Ascending aorta (tissue), 2 donors: ENCODE measurements at regions of chr6 and their contacts with region 1.

Region 1: GRCh38 chr6:72861935-72862432 is 240.1 kb downstream of the KCNQ5 start:
- DNase-seq: peak in 1 of 2 donors; percentile 80
- H3K4me3 ChIP-seq: no peak overlapping the region
- H3K27ac ChIP-seq: peak overlapping the region; percentile 58 to 86
- H3K4me1 ChIP-seq: peaks cover 9 to 30% of the 10 kb centered on the region in 2 donors
- H3K27me3 ChIP-seq: no peaks in the 10 kb centered on the region
- CTCF ChIP-seq: no peak

Region 2: GRCh38 chr6:72654071-72654621 is 207.8 kb before region 1 on chr6:
- intact Hi-C with region 1: loop called (anchors 5 kb)
- DNase-seq: no peak
- H3K4me3 ChIP-seq: no peak overlapping the region
- H3K27ac ChIP-seq: no peak overlapping the region
- H3K4me1 ChIP-seq: peaks cover 0 to 5% of the 10 kb centered on the region in 2 donors
- H3K27me3 ChIP-seq: no peaks in the 10 kb centered on the region
- CTCF ChIP-seq: no peak

Region 3: DNA sequence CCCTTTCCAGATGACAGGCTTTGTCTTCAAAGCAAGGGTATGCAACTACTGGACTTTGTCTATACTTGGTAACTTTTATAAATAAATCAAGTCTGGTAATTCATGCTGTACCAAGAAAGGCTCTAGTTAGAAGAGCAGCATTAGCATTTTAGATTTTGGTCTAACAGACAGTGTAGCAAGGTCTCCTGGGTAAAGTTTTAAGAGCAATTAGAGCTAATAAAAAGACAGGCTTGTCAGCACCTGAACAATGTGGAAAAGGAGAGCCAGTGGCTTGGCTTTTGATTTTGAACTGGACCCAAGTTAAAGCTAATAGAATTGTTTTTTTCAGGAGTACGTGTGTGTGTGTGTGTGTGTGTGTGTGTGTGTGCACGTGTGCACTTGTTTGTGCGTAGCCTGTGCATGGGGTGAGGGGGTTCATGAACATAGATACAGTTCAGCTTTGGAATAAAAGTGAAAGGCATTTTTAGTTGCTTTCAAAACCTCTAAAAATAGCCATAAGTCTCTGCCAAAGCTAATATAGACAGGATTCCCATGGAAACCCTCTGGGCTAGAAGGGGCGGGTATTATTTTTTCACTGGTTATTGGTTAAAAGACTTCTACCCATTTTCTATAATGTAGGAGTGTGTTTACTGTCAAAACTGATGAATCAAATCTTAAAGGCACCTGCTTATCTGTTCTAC is 101.7 kb before region 1 on chr6:
- intact Hi-C with region 1: loop called (anchors 5 kb)
- DNase-seq: no peak
- H3K4me3 ChIP-seq: peak overlapping the region in 1 of 2 donors; percentile 47
- H3K27ac ChIP-seq: peak overlapping the region in 1 of 2 donors; percentile 37
- H3K4me1 ChIP-seq: peaks cover 0 to 12% of the 10 kb centered on the region in 2 donors
- H3K27me3 ChIP-seq: no peaks in the 10 kb centered on the region
- CTCF ChIP-seq: no peak

Region 4: DNA sequence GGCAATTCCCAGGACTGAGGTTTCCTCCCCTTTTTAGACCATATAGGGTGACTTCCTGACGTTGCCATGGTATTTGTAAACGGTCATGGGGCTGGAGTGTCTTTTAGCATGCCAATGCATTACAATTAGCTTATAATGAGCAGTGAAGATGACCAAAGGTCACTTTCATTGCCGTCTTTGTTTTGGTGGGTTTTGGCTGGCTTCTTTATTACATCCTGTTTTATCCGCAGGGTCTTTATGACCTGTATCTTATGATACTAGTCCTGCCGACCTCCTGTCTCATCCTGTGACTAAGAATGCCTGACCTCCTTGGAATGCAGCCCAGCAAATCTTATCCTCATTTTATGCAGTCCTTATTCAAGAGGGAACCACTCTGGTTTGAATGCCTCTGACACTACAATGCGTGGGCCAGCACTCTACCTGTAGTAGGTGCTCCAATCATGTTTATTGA is 50.0 kb before region 1 on chr6:
- intact Hi-C with region 1: loop called (anchors 5 kb)
- DNase-seq: no peak
- H3K4me3 ChIP-seq: no peak overlapping the region
- H3K27ac ChIP-seq: no peak overlapping the region
- H3K4me1 ChIP-seq: peaks cover 0 to 17% of the 10 kb centered on the region in 2 donors
- H3K27me3 ChIP-seq: no peaks in the 10 kb centered on the region
- CTCF ChIP-seq: no peak

Region 5: DNA sequence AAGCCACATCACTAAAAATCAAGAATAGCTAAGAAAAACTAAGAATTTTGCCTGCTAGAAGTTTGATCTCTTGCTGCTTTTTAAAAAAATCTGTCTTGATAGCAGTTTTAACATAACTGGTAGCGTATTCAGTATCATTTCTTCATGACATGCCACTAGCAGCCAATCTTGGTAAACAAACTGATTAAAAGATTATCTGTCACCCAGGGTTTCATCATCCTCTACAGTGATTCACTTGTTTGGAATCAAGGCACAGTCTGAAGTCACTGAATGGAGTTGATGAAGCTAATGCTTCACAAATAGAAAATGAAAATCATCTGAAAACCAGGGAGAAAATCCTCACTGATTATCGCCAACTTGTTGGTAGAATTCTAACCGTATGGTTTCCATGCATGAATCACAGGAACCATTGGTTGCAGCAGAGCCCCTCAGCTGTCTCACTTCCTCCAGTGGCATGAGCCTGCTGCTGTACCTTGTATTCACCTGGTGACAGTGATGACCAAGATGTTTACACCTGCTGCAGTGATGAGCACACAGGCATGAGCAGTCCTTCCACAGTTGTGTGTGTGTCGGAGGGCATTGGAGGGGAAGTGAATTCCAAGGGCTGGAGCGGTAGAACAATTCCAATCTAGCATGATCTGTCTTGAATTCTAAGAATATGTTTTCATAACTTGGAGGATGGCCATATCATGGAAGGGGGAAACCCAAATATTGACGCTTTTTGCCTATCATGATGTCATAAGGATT is 88.3 kb after region 1 on chr6:
- intact Hi-C with region 1: loop called (anchors 2 kb)
- DNase-seq: no peak
- H3K4me3 ChIP-seq: no peak overlapping the region
- H3K27ac ChIP-seq: peak overlapping the region; percentile 52 to 62
- H3K4me1 ChIP-seq: peaks cover 0 to 36% of the 10 kb centered on the region in 2 donors
- H3K27me3 ChIP-seq: no peaks in the 10 kb centered on the region
- CTCF ChIP-seq: no peak

Region 6: DNA sequence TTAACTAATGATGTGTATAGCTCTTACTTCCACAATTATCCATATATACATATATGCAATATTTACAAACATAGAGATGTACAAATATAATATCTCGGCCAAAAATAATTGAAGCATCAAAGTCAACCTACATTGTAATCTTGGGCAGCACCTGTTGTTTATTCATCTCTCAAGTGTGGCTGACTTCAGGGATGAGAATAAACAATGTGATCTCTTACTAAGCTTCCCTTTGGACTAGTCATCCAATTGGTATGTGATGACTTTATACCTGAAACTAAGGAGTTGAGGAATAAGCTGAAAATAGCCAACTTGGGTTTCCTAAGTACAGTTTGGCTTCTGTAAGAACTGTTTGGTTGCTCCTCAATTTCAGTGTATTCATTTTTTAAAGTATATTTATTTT is 106.7 kb after region 1 on chr6:
- intact Hi-C with region 1: no loop called
- DNase-seq: no peak
- H3K4me3 ChIP-seq: no peak overlapping the region
- H3K27ac ChIP-seq: no peak overlapping the region
- H3K4me1 ChIP-seq: peaks cover under 1% of the 10 kb centered on the region in 2 donors
- H3K27me3 ChIP-seq: no peaks in the 10 kb centered on the region
- CTCF ChIP-seq: no peak